B cell (primary cell): ENCODE measurements at regions of chr9 and their contacts with region 1.

Region 1: DNA sequence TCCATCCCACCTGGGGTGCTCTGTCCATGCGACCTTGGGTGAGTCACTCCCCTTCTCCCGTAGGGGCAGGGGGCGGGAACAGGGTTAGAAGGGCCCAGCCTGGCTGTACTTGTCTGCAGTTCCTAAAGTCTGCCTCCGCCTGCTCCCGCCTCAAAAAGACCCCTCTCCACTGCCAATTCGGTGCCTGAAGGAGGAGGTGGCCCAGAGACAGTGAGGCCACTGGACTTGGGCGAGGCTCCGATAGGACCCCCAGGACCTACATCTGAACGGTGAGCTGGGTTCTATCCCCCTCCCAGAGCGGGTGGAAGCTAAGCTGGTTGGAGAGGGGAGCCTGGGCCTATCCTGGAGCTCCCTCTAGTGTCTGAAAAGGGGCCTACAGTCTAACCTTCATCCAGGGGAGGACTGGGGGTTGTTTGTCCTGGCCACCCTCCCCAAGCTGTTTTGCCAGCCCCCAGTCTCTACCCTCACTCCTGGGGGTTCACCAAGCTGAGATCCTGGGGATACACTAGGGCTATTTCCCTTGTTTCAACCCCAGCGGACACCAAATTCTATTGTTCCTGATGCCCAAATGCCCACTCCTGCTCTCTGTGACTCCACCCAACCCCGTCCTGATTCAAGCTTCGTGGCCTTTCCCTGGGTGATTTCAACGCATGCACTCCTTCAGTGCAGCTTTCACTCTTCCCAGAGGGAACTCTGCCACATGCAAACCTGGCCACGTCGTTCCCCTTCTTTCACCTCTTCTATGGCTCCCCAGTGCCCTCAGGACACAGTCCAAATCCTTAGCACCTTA is 6.1 kb upstream of the CRB2 start:
- DNase-seq: peak; percentile 85
- ATAC-seq: peak; percentile 87
- H3K4me3 ChIP-seq: peak overlapping the region in 3 of 5 experiments; percentile 19 to 50 (median 23)
- H3K4me3 Mint-ChIP-seq: peak overlapping the region; percentile 20
- H3K27ac ChIP-seq: no peak overlapping the region
- H3K27ac Mint-ChIP-seq: no peak overlapping the region
- H3K4me1 ChIP-seq: peaks cover 30 to 52% of the 10 kb centered on the region in 2 donors
- H3K4me1 Mint-ChIP-seq: peaks cover 19% of the 10 kb centered on the region
- H3K27me3 ChIP-seq: peaks cover 0 to 4% (median 0%) of the 10 kb centered on the region in 4 experiments
- H3K27me3 Mint-ChIP-seq: peaks cover 4% of the 10 kb centered on the region
- CTCF ChIP-seq: peak; percentile 95

Region 2: GRCh38 chr9:122005597-122005996 is 1344.3 kb before region 1 on chr9:
- CTCF ChIA-PET with region 1: no interaction called
- POLR2A ChIA-PET with region 1: no interaction called
- intact Hi-C with region 1: no loop called
- DNase-seq: no peak
- ATAC-seq: no peak
- H3K4me3 ChIP-seq: no peak overlapping the region
- H3K4me3 Mint-ChIP-seq: no peak overlapping the region
- H3K27ac ChIP-seq: no peak overlapping the region
- H3K27ac Mint-ChIP-seq: no peak overlapping the region
- H3K4me1 ChIP-seq: no peaks in the 10 kb centered on the region
- H3K4me1 Mint-ChIP-seq: no peaks in the 10 kb centered on the region
- H3K27me3 ChIP-seq: no peaks in the 10 kb centered on the region
- H3K27me3 Mint-ChIP-seq: no peaks in the 10 kb centered on the region
- CTCF ChIP-seq: no peak

Region 3: GRCh38 chr9:122684851-122685250 is 665.0 kb before region 1 on chr9:
- CTCF ChIA-PET with region 1: no interaction called
- POLR2A ChIA-PET with region 1: no interaction called
- intact Hi-C with region 1: no loop called
- DNase-seq: no peak
- ATAC-seq: no peak
- H3K4me3 ChIP-seq: no peak overlapping the region
- H3K4me3 Mint-ChIP-seq: no peak overlapping the region
- H3K27ac ChIP-seq: no peak overlapping the region
- H3K27ac Mint-ChIP-seq: no peak overlapping the region
- H3K4me1 ChIP-seq: no peaks in the 10 kb centered on the region
- H3K4me1 Mint-ChIP-seq: no peaks in the 10 kb centered on the region
- H3K27me3 ChIP-seq: peaks cover 0 to 3% (median 0%) of the 10 kb centered on the region in 4 experiments
- H3K27me3 Mint-ChIP-seq: peaks cover 24% of the 10 kb centered on the region
- CTCF ChIP-seq: no peak

Region 4: GRCh38 chr9:123091459-123091858 is 258.4 kb before region 1 on chr9:
- CTCF ChIA-PET with region 1: interaction called, 44 read pairs
- POLR2A ChIA-PET with region 1: no interaction called
- intact Hi-C with region 1: no loop called
- DNase-seq: no peak
- ATAC-seq: no peak
- H3K4me3 ChIP-seq: no peak overlapping the region
- H3K4me3 Mint-ChIP-seq: no peak overlapping the region
- H3K27ac ChIP-seq: no peak overlapping the region
- H3K27ac Mint-ChIP-seq: peak overlapping the region; percentile 44
- H3K4me1 ChIP-seq: peaks cover 46 to 52% of the 10 kb centered on the region in 2 donors
- H3K4me1 Mint-ChIP-seq: peaks cover 76% of the 10 kb centered on the region
- H3K27me3 ChIP-seq: no peaks in the 10 kb centered on the region
- H3K27me3 Mint-ChIP-seq: no peaks in the 10 kb centered on the region
- CTCF ChIP-seq: no peak

Region 5: GRCh38 chr9:123150708-123151503 is 199.0 kb before region 1 on chr9:
- CTCF ChIA-PET with region 1: interaction called, 13 read pairs
- POLR2A ChIA-PET with region 1: no interaction called
- intact Hi-C with region 1: no loop called
- DNase-seq: no peak
- ATAC-seq: no peak
- H3K4me3 ChIP-seq: no peak overlapping the region
- H3K4me3 Mint-ChIP-seq: no peak overlapping the region
- H3K27ac ChIP-seq: no peak overlapping the region
- H3K27ac Mint-ChIP-seq: no peak overlapping the region
- H3K4me1 ChIP-seq: no peaks in the 10 kb centered on the region
- H3K4me1 Mint-ChIP-seq: no peaks in the 10 kb centered on the region
- H3K27me3 ChIP-seq: no peaks in the 10 kb centered on the region
- H3K27me3 Mint-ChIP-seq: no peaks in the 10 kb centered on the region
- CTCF ChIP-seq: no peak

Region 6: GRCh38 chr9:123251741-123252140 is 98.1 kb before region 1 on chr9:
- CTCF ChIA-PET with region 1: interaction called, 18 read pairs
- POLR2A ChIA-PET with region 1: no interaction called
- intact Hi-C with region 1: no loop called
- DNase-seq: no peak
- ATAC-seq: no peak
- H3K4me3 ChIP-seq: no peak overlapping the region
- H3K4me3 Mint-ChIP-seq: peak overlapping the region; percentile 35
- H3K27ac ChIP-seq: peak overlapping the region in 1 of 2 donors; percentile 50
- H3K27ac Mint-ChIP-seq: no peak overlapping the region
- H3K4me1 ChIP-seq: peaks cover 30 to 46% of the 10 kb centered on the region in 2 donors
- H3K4me1 Mint-ChIP-seq: peaks cover 82% of the 10 kb centered on the region
- H3K27me3 ChIP-seq: no peaks in the 10 kb centered on the region
- H3K27me3 Mint-ChIP-seq: no peaks in the 10 kb centered on the region
- CTCF ChIP-seq: no peak

Region 7: DNA sequence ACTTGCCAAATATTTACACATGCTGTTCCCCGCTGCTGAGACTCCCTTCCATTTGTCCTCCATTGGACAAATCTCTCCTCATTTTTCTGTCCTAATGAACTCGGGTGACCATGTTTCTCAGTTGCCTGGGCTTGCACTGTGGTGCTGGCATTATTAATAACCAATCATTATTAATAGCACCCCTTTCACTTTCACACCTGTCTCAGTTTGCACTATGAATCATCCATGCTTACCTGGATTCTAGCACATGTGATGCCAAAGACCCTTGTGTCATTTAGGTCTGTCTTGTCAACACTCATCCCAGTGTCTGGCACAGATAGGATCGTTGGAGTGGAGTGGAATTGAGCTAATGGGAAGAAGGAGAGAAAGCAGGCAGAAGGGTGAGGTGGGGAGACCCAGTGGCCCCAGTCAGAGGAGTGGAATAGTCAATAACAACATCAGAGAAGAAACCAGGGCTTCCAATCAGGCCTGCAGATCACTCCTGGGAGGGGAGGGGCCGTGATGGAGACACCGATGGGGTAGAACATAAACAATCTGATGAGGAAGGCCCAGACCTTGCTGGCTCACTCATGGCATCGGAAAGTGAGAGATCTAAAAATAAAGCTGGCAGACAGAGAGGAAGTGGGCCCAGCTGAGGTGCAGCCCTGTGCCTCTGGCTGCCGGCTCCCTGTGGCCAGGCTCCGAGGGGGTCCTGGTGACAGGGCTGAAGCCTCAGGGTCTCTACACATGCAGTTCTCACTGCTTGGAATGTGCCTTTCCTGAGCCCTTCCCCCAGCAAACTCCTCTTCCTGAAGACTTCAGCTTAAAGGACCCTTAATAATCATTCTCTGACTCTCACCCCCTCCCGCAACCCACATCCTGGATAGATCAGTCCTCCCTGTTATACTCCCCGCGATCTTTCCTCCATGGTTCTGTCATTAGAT is 27.4 kb before region 1 on chr9:
- CTCF ChIA-PET with region 1: interaction called, 17 read pairs
- POLR2A ChIA-PET with region 1: no interaction called
- intact Hi-C with region 1: no loop called
- DNase-seq: peak; percentile 76
- ATAC-seq: peak; percentile 79
- H3K4me3 ChIP-seq: peak overlapping the region in 4 of 5 experiments; percentile 1 to 41 (median 34)
- H3K4me3 Mint-ChIP-seq: peak overlapping the region; percentile 66
- H3K27ac ChIP-seq: peak overlapping the region; percentile 73 to 86
- H3K27ac Mint-ChIP-seq: peak overlapping the region; percentile 89
- H3K4me1 ChIP-seq: peaks cover 70 to 85% of the 10 kb centered on the region in 2 donors
- H3K4me1 Mint-ChIP-seq: peaks cover 86% of the 10 kb centered on the region
- H3K27me3 ChIP-seq: no peaks in the 10 kb centered on the region
- H3K27me3 Mint-ChIP-seq: no peaks in the 10 kb centered on the region
- CTCF ChIP-seq: no peak

Region 8: GRCh38 chr9:123523001-123523400 is 173.1 kb after region 1 on chr9:
- CTCF ChIA-PET with region 1: no interaction called
- POLR2A ChIA-PET with region 1: no interaction called
- intact Hi-C with region 1: no loop called
- DNase-seq: no peak
- ATAC-seq: no peak
- H3K4me3 ChIP-seq: no peak overlapping the region
- H3K4me3 Mint-ChIP-seq: no peak overlapping the region
- H3K27ac ChIP-seq: no peak overlapping the region
- H3K27ac Mint-ChIP-seq: no peak overlapping the region
- H3K4me1 ChIP-seq: no peaks in the 10 kb centered on the region
- H3K4me1 Mint-ChIP-seq: no peaks in the 10 kb centered on the region
- H3K27me3 ChIP-seq: no peaks in the 10 kb centered on the region
- H3K27me3 Mint-ChIP-seq: no peaks in the 10 kb centered on the region
- CTCF ChIP-seq: no peak